IMR-90 (cell line): ENCODE measurements at regions of chr18 and their contacts with region 1.

Region 1: GRCh38 chr18:57630002-57630753 is 8.5 kb upstream of the NARS1 start:
- DNase-seq: peak; percentile 93
- ATAC-seq: peak; percentile 98
- H3K4me3 ChIP-seq: peak overlapping the region; percentile 62
- H3K27ac ChIP-seq: peak overlapping the region; percentile 90
- H3K4me1 ChIP-seq: peaks cover 3% of the 10 kb centered on the region
- H3K27me3 ChIP-seq: no peaks in the 10 kb centered on the region
- CTCF ChIP-seq: peak; percentile 82
- POLR2A ChIP-seq: peak; percentile 79
- RAD21 ChIP-seq: peak; percentile 75

Region 2: DNA sequence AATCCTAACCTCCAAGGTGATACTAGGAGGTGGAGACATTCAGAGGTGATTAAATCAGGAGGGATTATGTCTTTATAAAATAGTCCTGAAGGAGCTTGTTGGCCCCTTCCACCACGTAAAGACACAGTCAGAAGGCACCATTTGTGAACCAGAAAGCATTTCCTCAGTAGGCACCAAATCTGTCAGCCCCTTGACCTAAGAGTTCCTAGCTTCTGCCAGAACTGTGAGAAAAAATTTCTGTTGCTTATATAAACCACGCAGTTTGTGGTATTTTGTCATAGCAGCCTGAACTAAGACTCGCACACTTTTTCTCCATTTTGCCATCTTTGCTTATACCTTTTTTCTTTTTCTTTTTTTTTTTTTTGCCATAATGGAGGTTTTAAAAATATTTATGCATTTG is 10.1 kb after region 1 on chr18:
- CTCF ChIA-PET with region 1: interaction called, 3 read pairs
- POLR2A ChIA-PET with region 1: interaction called, 14 read pairs
- dilution Hi-C with region 1: no loop called
- in situ Hi-C with region 1: no loop called
- intact Hi-C with region 1: no loop called
- DNase-seq: peak; percentile 59
- ATAC-seq: 0 out of 2 replicates have a peak, but pooled peaks have one; percentile 21
- H3K4me3 ChIP-seq: no peak overlapping the region
- H3K27ac ChIP-seq: no peak overlapping the region
- H3K4me1 ChIP-seq: peaks cover 2% of the 10 kb centered on the region; the same call in 1 of the 2 replicates
- H3K27me3 ChIP-seq: no peaks in the 10 kb centered on the region
- CTCF ChIP-seq: no peak
- POLR2A ChIP-seq: no peak
- RAD21 ChIP-seq: no peak

Region 3: GRCh38 chr18:57859314-57859713 is 229.1 kb after region 1 on chr18:
- CTCF ChIA-PET with region 1: no interaction called
- POLR2A ChIA-PET with region 1: no interaction called
- dilution Hi-C with region 1: no loop called
- in situ Hi-C with region 1: no loop called
- intact Hi-C with region 1: loop called (anchors 10 kb)
- DNase-seq: no peak
- ATAC-seq: peak; percentile 59; the same call in 1 of the 2 replicates
- H3K4me3 ChIP-seq: no peak overlapping the region
- H3K27ac ChIP-seq: no peak overlapping the region
- H3K4me1 ChIP-seq: no peaks in the 10 kb centered on the region
- H3K27me3 ChIP-seq: no peaks in the 10 kb centered on the region
- CTCF ChIP-seq: peak; percentile 23; the same call in 1 of the 2 replicates
- POLR2A ChIP-seq: no peak
- RAD21 ChIP-seq: peak; percentile 40

Region 4: DNA sequence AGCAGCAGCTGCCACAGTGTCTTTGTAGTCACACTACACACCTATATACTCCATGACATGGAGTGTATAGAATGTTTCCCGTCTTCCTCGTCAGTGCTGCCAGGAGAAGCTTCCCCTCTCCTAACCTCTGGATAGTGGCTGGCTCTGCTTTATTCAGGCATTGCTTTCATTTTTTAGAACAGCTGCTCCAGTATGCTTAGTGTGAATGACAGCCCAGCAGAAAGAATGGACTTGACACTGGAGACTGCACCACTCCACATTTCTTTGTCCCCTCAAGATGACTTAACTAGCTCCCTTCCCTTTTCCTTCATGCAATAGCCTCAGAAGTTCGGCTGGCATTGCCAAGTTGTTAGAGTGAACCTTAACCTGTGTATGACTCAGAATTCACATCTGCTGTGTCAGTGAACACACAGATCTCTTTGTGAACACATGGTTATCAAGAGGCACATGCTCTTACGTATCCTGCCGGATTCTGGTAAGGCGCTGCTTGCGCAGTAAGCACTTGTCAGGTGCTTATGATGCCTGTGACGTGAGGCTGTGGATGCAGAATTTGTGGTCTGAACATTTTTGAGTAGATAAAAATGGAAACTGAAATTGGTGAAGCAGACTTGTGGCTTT is 487.7 kb after region 1 on chr18:
- CTCF ChIA-PET with region 1: no interaction called
- POLR2A ChIA-PET with region 1: no interaction called
- dilution Hi-C with region 1: no loop called
- in situ Hi-C with region 1: loop called (anchors 25 kb)
- intact Hi-C with region 1: loop called (anchors 5 kb)
- DNase-seq: peak; percentile 98
- ATAC-seq: peak; percentile 79
- H3K4me3 ChIP-seq: no peak overlapping the region
- H3K27ac ChIP-seq: no peak overlapping the region
- H3K4me1 ChIP-seq: peaks cover 8% of the 10 kb centered on the region
- H3K27me3 ChIP-seq: no peaks in the 10 kb centered on the region
- CTCF ChIP-seq: no peak
- POLR2A ChIP-seq: no peak
- RAD21 ChIP-seq: no peak

Region 5: DNA sequence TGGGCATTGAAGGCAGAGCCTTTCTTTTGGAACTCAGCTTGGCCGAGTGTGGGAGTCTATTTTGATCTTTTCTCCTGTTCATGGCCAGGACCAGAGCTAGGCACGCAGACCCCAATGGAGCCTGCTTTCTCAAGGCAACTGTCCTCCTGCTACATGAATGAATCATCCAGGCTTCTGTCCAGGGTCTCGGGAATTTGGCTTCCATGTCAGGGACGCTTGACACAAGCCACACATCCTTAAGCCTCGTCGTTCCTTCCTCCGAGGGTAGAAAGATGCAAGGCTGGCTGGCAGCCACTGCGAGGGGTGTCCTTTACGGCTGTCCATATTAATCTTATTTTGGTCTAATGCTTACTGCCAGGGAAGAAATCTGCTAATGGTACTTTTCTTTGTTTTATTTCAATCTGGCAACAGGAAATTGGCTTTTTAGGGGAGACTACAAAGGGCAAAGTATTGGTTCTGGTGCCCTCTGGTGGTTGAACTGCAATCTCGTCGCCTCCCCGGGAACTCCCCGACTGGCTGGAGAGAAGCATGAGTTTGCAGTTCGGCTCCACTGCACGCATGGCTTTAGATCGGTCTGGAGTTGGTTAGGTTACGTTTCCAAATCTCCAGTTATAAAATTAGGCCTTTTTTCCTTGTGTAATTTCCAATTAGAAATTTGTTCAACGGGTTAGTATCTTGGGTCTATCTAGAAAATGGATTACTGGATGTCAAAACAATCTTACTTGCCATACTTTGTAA is 863.5 kb after region 1 on chr18:
- CTCF ChIA-PET with region 1: no interaction called
- POLR2A ChIA-PET with region 1: no interaction called
- dilution Hi-C with region 1: no loop called
- in situ Hi-C with region 1: loop called (anchors 25 kb)
- intact Hi-C with region 1: no loop called
- DNase-seq: peak; percentile 84
- ATAC-seq: peak; percentile 89
- H3K4me3 ChIP-seq: no peak overlapping the region
- H3K27ac ChIP-seq: no peak overlapping the region
- H3K4me1 ChIP-seq: peaks cover 7% of the 10 kb centered on the region; the same call in 1 of the 2 replicates
- H3K27me3 ChIP-seq: no peaks in the 10 kb centered on the region
- CTCF ChIP-seq: peak; percentile 88
- POLR2A ChIP-seq: no peak
- RAD21 ChIP-seq: peak; percentile 83

Region 6: GRCh38 chr18:58847383-58848071 is 1217.3 kb after region 1 on chr18:
- CTCF ChIA-PET with region 1: no interaction called
- POLR2A ChIA-PET with region 1: no interaction called
- dilution Hi-C with region 1: no loop called
- in situ Hi-C with region 1: no loop called
- intact Hi-C with region 1: no loop called
- DNase-seq: no peak
- ATAC-seq: no peak
- H3K4me3 ChIP-seq: no peak overlapping the region
- H3K27ac ChIP-seq: no peak overlapping the region
- H3K4me1 ChIP-seq: no peaks in the 10 kb centered on the region; the same call in 1 of the 2 replicates
- H3K27me3 ChIP-seq: no peaks in the 10 kb centered on the region
- CTCF ChIP-seq: no peak
- POLR2A ChIP-seq: no peak
- RAD21 ChIP-seq: no peak